ENCODE measurements at regions of chr20 and their contacts with region 1.

Region 1: GRCh38 chr20:63537525-63538203 is 488 bp upstream of the PTK6 start:
- DNase-seq: peak; percentile 62 to 87 (median 80)
- H3K4me3 ChIP-seq: no peak overlapping the region
- H3K27ac ChIP-seq: no peak overlapping the region
- H3K4me1 ChIP-seq: peaks cover 2% of the 10 kb centered on the region
- H3K27me3 ChIP-seq: no peaks in the 10 kb centered on the region
- CTCF ChIP-seq: peak; percentile 74 to 96 (median 93)
- EP300 ChIP-seq: no peak
- POLR2A ChIP-seq: no peak

Region 2: GRCh38 chr20:63409459-63410435 is 127.9 kb before region 1 on chr20:
- intact Hi-C with region 1: no loop called
- DNase-seq: no peak
- H3K4me3 ChIP-seq: no peak overlapping the region
- H3K27ac ChIP-seq: no peak overlapping the region
- H3K4me1 ChIP-seq: no peaks in the 10 kb centered on the region
- H3K27me3 ChIP-seq: no peaks in the 10 kb centered on the region
- CTCF ChIP-seq: no peak
- EP300 ChIP-seq: no peak
- POLR2A ChIP-seq: no peak

Region 3: GRCh38 chr20:63641792-63642544 is 104.3 kb after region 1 on chr20:
- intact Hi-C with region 1: loop called in 1 of 4 experiments (anchors 10 kb)
- DNase-seq: peak; percentile 88 to 95 (median 94)
- H3K4me3 ChIP-seq: peak overlapping the region; percentile 41
- H3K27ac ChIP-seq: peak overlapping the region in 1 of 2 donors; percentile 56
- H3K4me1 ChIP-seq: peaks cover 12% of the 10 kb centered on the region
- H3K27me3 ChIP-seq: no peaks in the 10 kb centered on the region
- CTCF ChIP-seq: peak in 2 of 3 donors; percentile 63 to 76
- EP300 ChIP-seq: no peak
- POLR2A ChIP-seq: no peak

Region 4: GRCh38 chr20:63750807-63751470 is 213.3 kb after region 1 on chr20:
- intact Hi-C with region 1: no loop called
- DNase-seq: peak in 1 of 5 donors; percentile 19
- H3K4me3 ChIP-seq: no peak overlapping the region
- H3K27ac ChIP-seq: no peak overlapping the region
- H3K4me1 ChIP-seq: no peaks in the 10 kb centered on the region
- H3K27me3 ChIP-seq: no peaks in the 10 kb centered on the region
- CTCF ChIP-seq: no peak
- EP300 ChIP-seq: no peak
- POLR2A ChIP-seq: no peak

Region 5: GRCh38 chr20:63873477-63873971 is 335.9 kb after region 1 on chr20:
- intact Hi-C with region 1: loop called in 1 of 4 experiments (anchors 10 kb)
- DNase-seq: no peak
- H3K4me3 ChIP-seq: no peak overlapping the region
- H3K27ac ChIP-seq: no peak overlapping the region
- H3K4me1 ChIP-seq: no peaks in the 10 kb centered on the region
- H3K27me3 ChIP-seq: no peaks in the 10 kb centered on the region
- CTCF ChIP-seq: no peak
- EP300 ChIP-seq: no peak
- POLR2A ChIP-seq: no peak

Region 6: GRCh38 chr20:63973636-63974402 is 436.2 kb after region 1 on chr20:
- intact Hi-C with region 1: loop called (anchors 2 to 5 kb)
- DNase-seq: peak; percentile 81 to 91 (median 90)
- H3K4me3 ChIP-seq: peak overlapping the region; percentile 3
- H3K27ac ChIP-seq: no peak overlapping the region
- H3K4me1 ChIP-seq: peaks cover 6% of the 10 kb centered on the region
- H3K27me3 ChIP-seq: peaks cover 5% of the 10 kb centered on the region
- CTCF ChIP-seq: peak; percentile 96 to 99 (median 97)
- EP300 ChIP-seq: no peak
- POLR2A ChIP-seq: no peak

Region 7: DNA sequence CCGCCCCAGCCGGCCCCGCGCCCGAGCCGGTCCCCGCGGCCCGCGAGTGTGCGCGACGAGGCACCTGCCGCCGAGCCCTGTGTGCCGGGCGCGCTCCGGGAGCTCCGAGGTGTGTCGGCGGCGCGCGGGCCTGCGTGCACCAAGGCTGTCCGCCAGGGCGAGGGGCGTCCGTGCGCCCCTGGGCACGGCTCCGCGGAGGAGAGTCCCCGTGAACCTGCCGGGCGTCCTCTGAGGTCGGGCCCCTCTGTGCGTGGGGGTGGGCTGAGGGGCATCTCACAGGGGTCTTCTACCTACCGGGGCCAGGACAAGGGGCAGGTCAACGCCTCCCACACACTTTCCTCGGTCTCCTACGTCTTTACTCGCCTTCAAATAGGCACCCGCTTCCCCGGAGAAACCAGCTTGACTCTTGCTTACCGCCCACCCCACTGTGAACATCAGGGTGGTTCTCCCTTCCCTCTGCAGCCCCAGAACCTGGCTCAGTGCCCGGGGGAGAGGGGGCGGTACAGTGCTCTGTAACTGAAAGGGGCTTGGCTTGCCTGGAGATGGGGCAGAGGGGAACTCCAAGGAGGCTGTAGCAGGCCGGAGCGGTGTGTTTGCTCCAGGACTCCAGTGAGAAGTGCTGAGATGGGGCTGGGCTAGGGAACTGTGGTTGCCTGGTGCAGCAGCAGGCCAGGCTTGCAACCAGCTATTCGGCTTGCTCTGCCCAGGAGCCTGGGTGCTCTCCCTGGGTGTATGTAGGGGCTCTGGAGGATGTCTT is 442.1 kb after region 1 on chr20 and contains the start of gene SAMD10:
- intact Hi-C with region 1: loop called (anchors 2 to 5 kb)
- DNase-seq: peak in 4 of 5 donors; percentile 23 to 61 (median 59)
- H3K4me3 ChIP-seq: peak within 1 kb of the TSS; percentile 83
- H3K27ac ChIP-seq: no peak within 1 kb of the TSS
- H3K4me1 ChIP-seq: peaks cover 16% of the 10 kb centered on the region
- H3K27me3 ChIP-seq: peaks cover 5% of the 10 kb centered on the region
- CTCF ChIP-seq: no peak
- EP300 ChIP-seq: no peak
- POLR2A ChIP-seq: no peak
- total RNA-seq, gene SAMD10: 0.20 to 3.1 (median 0.65) TPM